ENCODE measurements at regions of chr9 and their contacts with region 1.

Region 1: GRCh38 chr9:17462869-17463464 is 115.9 kb upstream of the SH3GL2 start:
- DNase-seq: peak in 1 of 2 donors; percentile 27
- H3K4me3 ChIP-seq: no peak overlapping the region
- H3K27ac ChIP-seq: no peak overlapping the region
- H3K4me1 ChIP-seq: no peaks in the 10 kb centered on the region
- H3K27me3 ChIP-seq: no peaks in the 10 kb centered on the region
- CTCF ChIP-seq: peak; percentile 58 to 66

Region 2: DNA sequence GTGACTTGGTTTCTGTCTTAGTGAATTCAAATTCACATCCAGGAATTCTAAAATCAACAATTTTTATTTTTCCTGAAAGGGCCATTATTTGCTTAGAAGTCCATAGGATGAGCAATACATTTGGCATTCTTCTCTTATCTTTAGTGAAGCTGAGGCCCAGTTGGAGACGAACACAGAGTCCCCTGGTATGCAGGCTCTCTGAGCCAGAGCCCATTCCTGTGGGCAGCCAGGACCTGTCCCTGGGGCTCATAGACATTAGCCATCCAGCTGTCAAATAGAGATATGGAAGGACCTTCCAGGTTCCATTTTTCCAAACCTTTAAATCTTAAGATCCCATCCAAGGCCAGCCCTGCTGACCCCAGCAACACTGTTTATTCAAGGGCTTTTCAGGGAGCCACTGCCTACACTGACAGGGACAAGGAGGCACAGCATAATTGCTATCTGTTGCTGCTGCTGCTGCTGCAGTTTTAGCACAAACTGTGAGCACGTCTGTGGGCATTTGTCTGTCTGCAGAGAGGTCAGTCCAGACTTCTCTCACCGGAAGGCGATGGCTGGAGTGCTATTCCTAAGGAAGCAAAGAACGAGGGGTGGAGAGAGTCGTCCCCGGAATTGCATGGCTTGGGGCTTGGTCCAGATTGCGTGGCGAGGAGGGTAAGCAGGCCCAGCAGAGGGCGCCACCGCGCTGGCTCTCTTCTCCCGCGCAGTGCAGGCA is 1271.1 kb before region 1 on chr9:
- intact Hi-C with region 1: loop called (anchors 10 kb)
- DNase-seq: peak; percentile 80 to 86
- H3K4me3 ChIP-seq: no peak overlapping the region
- H3K27ac ChIP-seq: peak overlapping the region in 1 of 2 donors; percentile 15
- H3K4me1 ChIP-seq: peaks cover 0 to 23% (median 18%) of the 10 kb centered on the region in 4 donors
- H3K27me3 ChIP-seq: no peaks in the 10 kb centered on the region
- CTCF ChIP-seq: peak; percentile 70 to 78

Region 3: GRCh38 chr9:17116400-17116837 is 346.5 kb before region 1 on chr9:
- intact Hi-C with region 1: loop called (anchors 5 kb)
- DNase-seq: no peak
- H3K4me3 ChIP-seq: no peak overlapping the region
- H3K27ac ChIP-seq: no peak overlapping the region
- H3K4me1 ChIP-seq: peaks cover 0 to 11% (median 2%) of the 10 kb centered on the region in 4 donors
- H3K27me3 ChIP-seq: no peaks in the 10 kb centered on the region
- CTCF ChIP-seq: peak; percentile 43 to 57

Region 4: DNA sequence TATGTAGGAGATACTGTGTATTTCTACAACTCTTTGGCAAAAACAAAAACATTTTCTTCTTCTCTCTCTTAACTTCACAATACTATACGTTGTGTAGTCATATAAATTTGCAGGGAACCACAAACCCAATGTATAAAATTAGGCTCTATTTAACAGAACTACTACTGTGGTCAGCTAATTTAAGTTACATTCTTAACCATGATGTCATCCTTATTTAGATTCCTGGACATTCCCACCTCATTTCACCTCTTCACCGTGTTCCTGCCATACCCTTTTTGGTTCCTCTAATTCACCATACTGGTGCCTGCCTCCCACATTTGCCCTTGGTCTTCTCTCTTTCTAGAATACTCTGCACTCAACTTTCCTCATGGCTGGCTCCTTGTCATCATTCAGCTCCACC is 40.2 kb after region 1 on chr9:
- intact Hi-C with region 1: no loop called
- DNase-seq: no peak
- H3K4me3 ChIP-seq: no peak overlapping the region
- H3K27ac ChIP-seq: no peak overlapping the region
- H3K4me1 ChIP-seq: no peaks in the 10 kb centered on the region
- H3K27me3 ChIP-seq: no peaks in the 10 kb centered on the region
- CTCF ChIP-seq: no peak

Measured in tibial artery (tissue), 4 donors.